Activated T-helper 2 cell treated with anti-CD3 and anti-CD28 coated beads, Interferon-gamma antibody, Interleukin-2, Interleukin-4, amounts not matched to agents 10 μg/mL and 5 μg/mL and 100 μg/mL, durations not matched to agents 14 hours and 24 hours and 36 hours (primary cell): ENCODE measurements at regions of chr19 and their contacts with region 1.

Region 1: GRCh38 chr19:36114763-36115452 is at the start of gene POLR2I:
- DNase-seq: peak; percentile 99
- H3K4me3 Mint-ChIP-seq: peak within 1 kb of the TSS; percentile 90
- H3K27ac Mint-ChIP-seq: peak within 1 kb of the TSS; percentile 89
- H3K4me1 Mint-ChIP-seq: peaks cover 21% of the 10 kb centered on the region
- H3K27me3 Mint-ChIP-seq: no peaks in the 10 kb centered on the region
- total RNA-seq, gene POLR2I: 68.9 and 75.3 TPM in 2 replicates

Region 2: GRCh38 chr19:35757749-35758608 is 356.9 kb before region 1 on chr19 and contains the start of gene PROSER3:
- intact Hi-C with region 1: loop called (anchors 5 kb)
- DNase-seq: peak; percentile 100
- H3K4me3 Mint-ChIP-seq: peak within 1 kb of the TSS; percentile 83
- H3K27ac Mint-ChIP-seq: peak within 1 kb of the TSS; percentile 85
- H3K4me1 Mint-ChIP-seq: peaks cover 21% of the 10 kb centered on the region
- H3K27me3 Mint-ChIP-seq: no peaks in the 10 kb centered on the region
- total RNA-seq, gene PROSER3: 40.1 and 41.2 TPM in 2 replicates

Region 3: DNA sequence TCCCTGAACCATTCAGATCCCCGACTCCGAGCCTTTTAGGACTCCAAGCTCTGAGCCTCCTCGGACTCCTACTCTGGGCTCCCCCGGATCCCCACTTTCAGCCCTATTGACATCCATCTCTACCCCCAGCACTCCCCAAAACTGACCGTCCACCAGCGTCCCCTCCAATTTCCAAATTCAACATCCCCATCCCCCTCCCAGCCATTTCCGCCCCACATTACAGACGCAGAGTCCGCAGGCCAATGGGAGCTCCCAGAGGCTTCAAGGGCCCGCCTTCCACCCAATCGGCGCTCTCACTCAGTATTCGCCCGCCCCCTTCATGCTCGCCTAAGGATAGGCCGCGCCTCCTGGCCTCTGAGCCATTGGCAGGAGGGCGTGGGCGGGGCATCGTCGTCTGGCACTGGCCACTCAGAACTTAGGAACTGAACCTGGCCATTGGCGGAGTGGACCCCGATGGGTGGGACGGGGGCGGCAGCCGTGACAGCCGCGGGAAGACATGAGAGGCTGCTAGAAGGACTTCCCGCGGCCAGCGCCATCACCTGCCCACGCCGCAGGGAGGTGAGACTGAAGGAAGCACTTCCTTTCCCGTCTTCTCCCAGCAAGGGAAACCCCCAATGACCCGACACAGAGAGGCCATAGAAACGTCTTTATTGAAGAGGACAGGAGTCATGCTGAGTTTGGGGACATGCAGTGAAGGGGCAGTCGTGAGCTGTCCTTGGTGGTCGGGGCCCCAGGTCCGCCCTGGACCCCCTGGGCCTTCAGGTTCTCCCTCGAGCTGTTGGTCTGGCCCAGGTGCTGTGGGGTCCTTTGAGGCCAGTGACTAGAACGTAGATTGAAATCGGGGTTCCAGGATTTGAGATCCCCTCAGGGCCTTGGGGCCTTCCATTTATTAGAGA is 100.6 kb before region 1 on chr19 and contains the start of gene ALKBH6:
- intact Hi-C with region 1: loop called (anchors 1 kb)
- DNase-seq: peak; percentile 99
- H3K4me3 Mint-ChIP-seq: peak within 1 kb of the TSS; percentile 93
- H3K27ac Mint-ChIP-seq: peak within 1 kb of the TSS; percentile 92
- H3K4me1 Mint-ChIP-seq: peaks cover 33% of the 10 kb centered on the region
- H3K27me3 Mint-ChIP-seq: no peaks in the 10 kb centered on the region
- total RNA-seq, gene ALKBH6: 49.9 and 54.3 TPM in 2 replicates

Region 4: DNA sequence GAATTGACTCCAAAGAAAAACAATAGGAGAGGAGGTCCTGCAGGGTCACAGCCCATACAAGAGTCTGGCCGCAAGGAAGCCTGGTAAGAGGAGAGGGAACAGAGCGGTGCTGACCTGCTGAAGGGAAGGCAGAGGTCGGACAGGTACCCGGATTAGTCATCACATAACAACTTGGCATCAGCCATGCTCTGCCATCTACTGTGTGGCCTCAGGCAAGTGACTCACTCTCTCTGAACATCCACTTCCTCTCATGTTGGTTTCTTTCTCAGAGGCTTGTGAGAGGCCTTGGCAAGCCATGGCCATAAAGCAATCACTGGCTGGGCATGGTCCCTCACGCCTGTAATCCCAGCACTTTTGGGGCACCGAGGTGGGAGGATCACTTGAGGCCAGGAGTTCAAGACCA is 17.6 kb after region 1 on chr19:
- intact Hi-C with region 1: loop called (anchors 1 kb)
- DNase-seq: no peak
- H3K4me3 Mint-ChIP-seq: peak overlapping the region; percentile 2
- H3K27ac Mint-ChIP-seq: peak overlapping the region; percentile 30
- H3K4me1 Mint-ChIP-seq: peaks cover 26% of the 10 kb centered on the region
- H3K27me3 Mint-ChIP-seq: no peaks in the 10 kb centered on the region